Naive thymus-derived CD4-positive, alpha-beta T cell (primary cell): ENCODE measurements at regions of chr15 and their contacts with region 1.

Region 1: DNA sequence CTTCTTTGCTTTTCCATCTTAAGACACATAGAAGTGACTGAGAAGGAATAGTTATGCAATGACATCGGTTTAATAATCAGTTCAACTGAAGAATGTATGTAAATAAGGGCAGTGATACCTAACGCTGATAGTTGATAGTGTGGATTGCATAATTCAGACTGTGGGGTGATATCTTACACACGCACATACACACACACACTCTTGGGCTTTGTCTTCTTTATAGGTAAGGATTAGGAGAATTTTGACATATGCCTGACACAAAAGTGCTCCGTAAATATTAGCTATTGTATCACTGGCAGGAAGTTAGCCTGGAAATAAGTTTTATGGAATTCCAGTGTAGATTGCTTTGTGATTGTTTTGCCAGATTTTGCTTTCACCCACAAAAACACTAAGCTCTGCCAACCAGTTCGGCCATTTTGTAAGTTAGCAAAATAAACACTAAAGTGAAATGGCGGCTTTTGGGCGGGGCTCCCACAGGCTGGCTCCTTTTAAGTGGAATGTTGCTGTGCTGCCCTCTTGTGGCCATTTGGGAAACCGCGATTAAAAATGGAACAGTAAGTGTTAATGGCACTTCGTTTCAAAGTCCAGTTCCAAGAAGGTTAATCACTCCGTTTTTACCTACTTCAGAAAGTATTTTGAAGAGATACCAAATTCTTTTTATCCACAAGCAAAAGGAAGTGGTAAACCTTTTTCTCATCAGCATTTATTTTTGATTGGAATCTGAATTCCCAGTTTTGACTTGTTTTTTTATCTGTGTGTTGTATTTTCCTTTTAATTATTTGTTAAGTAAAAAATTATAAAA is 17.7 kb downstream of the CHD2 start:
- DNase-seq: peak; percentile 74 to 91 (median 89)
- ATAC-seq: peak; percentile 78
- H3K4me3 ChIP-seq: peak overlapping the region; percentile 5
- H3K4me3 Mint-ChIP-seq: peak overlapping the region; percentile 43 to 81 (median 70)
- H3K27ac ChIP-seq: peak overlapping the region; percentile 92
- H3K27ac Mint-ChIP-seq: peak overlapping the region; percentile 82 to 100 (median 96)
- H3K4me1 ChIP-seq: peaks cover 64 to 76% of the 10 kb centered on the region in 2 donors
- H3K4me1 Mint-ChIP-seq: peaks cover 53 to 92% (median 86%) of the 10 kb centered on the region in 7 donors
- H3K27me3 ChIP-seq: no peaks in the 10 kb centered on the region
- H3K27me3 Mint-ChIP-seq: no peaks in the 10 kb centered on the region

Region 2: DNA sequence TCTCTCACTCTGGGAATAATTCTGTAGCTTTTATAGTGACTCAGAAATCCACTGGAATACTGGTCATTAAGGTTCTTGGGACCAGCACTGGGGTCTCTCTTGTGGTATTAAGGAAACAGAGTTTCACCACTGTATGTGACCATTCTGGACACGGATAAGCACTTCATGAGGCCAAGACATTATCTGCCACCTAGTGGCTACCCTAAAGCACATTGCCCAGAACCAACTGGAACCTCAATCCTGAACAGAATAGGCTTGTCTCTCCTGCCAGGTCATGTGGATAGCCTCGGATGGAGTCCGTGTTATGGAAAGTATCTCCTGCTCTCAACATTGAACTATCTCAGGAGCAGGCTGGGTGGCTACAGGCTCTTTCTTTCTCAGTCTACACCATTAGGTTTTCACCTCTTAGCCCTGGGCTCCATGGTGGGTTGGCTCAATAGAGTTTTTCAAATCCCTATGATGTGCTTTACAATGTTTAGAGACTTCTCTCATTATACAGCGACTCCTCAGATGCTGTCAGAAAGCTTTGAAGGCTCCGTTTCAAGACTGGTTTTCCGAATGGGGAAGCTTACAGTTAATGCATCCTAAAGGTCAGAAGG is 691.7 kb before region 1 on chr15:
- CTCF ChIA-PET with region 1: no interaction called
- POLR2A ChIA-PET with region 1: no interaction called
- intact Hi-C with region 1: no loop called
- DNase-seq: no peak
- ATAC-seq: no peak
- H3K4me3 ChIP-seq: no peak overlapping the region
- H3K4me3 Mint-ChIP-seq: no peak overlapping the region
- H3K27ac ChIP-seq: no peak overlapping the region
- H3K27ac Mint-ChIP-seq: no peak overlapping the region
- H3K4me1 ChIP-seq: no peaks in the 10 kb centered on the region
- H3K4me1 Mint-ChIP-seq: no peaks in the 10 kb centered on the region
- H3K27me3 ChIP-seq: no peaks in the 10 kb centered on the region
- H3K27me3 Mint-ChIP-seq: peaks cover 9 to 41% (median 29%) of the 10 kb centered on the region in 5 donors

Region 3: GRCh38 chr15:92797168-92797951 is 120.4 kb before region 1 on chr15:
- CTCF ChIA-PET with region 1: interaction called, 21 read pairs
- POLR2A ChIA-PET with region 1: interaction called, 45 read pairs
- intact Hi-C with region 1: loop called (anchors 1 kb)
- DNase-seq: peak in 7 of 9 donors; percentile 61 to 81 (median 74)
- ATAC-seq: peak; percentile 95
- H3K4me3 ChIP-seq: no peak overlapping the region
- H3K4me3 Mint-ChIP-seq: peak overlapping the region in 1 of 10 donors; percentile 12
- H3K27ac ChIP-seq: no peak overlapping the region
- H3K27ac Mint-ChIP-seq: peak overlapping the region; percentile 72 to 95 (median 79)
- H3K4me1 ChIP-seq: peaks cover 3 to 4% of the 10 kb centered on the region in 2 donors
- H3K4me1 Mint-ChIP-seq: peaks cover 6 to 23% (median 12%) of the 10 kb centered on the region in 7 donors
- H3K27me3 ChIP-seq: no peaks in the 10 kb centered on the region
- H3K27me3 Mint-ChIP-seq: no peaks in the 10 kb centered on the region

Region 4: DNA sequence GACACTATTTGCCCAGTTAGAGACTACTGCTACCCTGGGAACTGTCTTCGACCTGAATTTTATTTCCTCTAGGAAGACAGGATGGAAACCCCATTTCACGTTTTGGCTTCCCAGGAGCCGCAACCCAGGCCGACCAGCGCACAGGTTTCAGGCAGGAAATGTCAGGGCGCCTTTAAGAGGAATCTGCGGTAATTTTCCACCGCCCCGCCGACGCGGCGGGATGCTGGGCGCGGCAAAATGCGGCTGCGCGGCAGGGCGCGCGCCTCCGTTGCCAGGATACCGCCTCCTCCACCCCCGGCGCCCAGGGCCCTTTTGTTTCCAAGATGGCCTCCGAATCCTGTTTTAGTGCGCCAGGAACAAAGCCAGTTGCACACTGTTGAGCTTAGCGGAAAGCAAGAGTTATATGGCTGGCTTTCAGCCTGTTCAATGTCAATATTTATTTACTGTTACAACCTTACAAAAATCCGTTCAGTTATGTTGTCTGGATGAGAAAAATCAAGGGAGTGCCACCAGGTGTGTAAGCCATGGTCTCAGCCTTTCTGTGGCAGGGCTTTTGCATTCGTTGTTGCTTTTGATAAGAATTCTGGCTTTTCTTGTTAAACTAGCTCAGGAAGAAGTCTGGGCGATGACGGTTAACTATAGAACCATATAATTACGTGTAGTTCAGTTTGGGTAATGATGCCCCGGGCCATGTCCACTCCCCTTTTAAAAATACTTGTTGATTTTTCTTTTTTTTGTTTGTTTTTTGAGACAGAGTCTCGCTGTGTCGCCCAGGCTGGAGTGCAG is 97.4 kb before region 1 on chr15:
- CTCF ChIA-PET with region 1: interaction called, 4 read pairs
- POLR2A ChIA-PET with region 1: interaction called, 11 read pairs
- intact Hi-C with region 1: no loop called
- DNase-seq: peak; percentile 74 to 90 (median 86)
- ATAC-seq: peak; percentile 95
- H3K4me3 ChIP-seq: peak overlapping the region; percentile 76
- H3K4me3 Mint-ChIP-seq: peak overlapping the region; percentile 63 to 93 (median 88)
- H3K27ac ChIP-seq: peak overlapping the region; percentile 86
- H3K27ac Mint-ChIP-seq: peak overlapping the region; percentile 78 to 98 (median 91)
- H3K4me1 ChIP-seq: peaks cover 16 to 47% of the 10 kb centered on the region in 2 donors
- H3K4me1 Mint-ChIP-seq: peaks cover 25 to 74% (median 70%) of the 10 kb centered on the region in 7 donors
- H3K27me3 ChIP-seq: no peaks in the 10 kb centered on the region
- H3K27me3 Mint-ChIP-seq: no peaks in the 10 kb centered on the region

Region 5: DNA sequence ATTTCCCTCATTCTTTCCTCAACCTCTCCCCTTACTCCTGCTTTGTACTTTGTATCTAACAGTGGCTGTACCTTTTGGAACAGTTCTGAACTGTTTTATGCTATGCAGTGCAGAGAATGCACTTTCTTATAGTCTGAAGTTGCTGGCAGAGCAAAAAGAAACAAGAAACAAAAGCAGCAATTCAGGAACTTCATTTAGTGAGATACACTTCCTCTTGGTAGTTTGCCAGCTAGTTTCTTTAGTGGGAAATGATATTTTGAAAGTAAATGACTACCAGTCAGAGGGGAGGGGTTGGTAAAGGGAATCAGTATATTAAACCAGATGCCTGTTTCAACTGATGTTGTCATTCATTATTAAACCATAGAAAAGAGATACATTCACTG is 72.7 kb before region 1 on chr15:
- CTCF ChIA-PET with region 1: no interaction called
- POLR2A ChIA-PET with region 1: interaction called, 5 read pairs
- intact Hi-C with region 1: loop called in 1 of 2 experiments (anchors 1 kb)
- DNase-seq: peak in 7 of 9 donors; percentile 66 to 83 (median 73)
- ATAC-seq: peak; percentile 66
- H3K4me3 ChIP-seq: peak overlapping the region; percentile 11
- H3K4me3 Mint-ChIP-seq: peak overlapping the region; percentile 56 to 95 (median 82)
- H3K27ac ChIP-seq: peak overlapping the region; percentile 72
- H3K27ac Mint-ChIP-seq: peak overlapping the region; percentile 93 to 99 (median 97)
- H3K4me1 ChIP-seq: peaks cover 21 to 78% of the 10 kb centered on the region in 2 donors
- H3K4me1 Mint-ChIP-seq: peaks cover 41 to 91% (median 81%) of the 10 kb centered on the region in 7 donors
- H3K27me3 ChIP-seq: no peaks in the 10 kb centered on the region
- H3K27me3 Mint-ChIP-seq: no peaks in the 10 kb centered on the region

Region 6: GRCh38 chr15:92889390-92890107 is 28.3 kb before region 1 on chr15:
- CTCF ChIA-PET with region 1: interaction called, 8 read pairs
- POLR2A ChIA-PET with region 1: interaction called, 216 read pairs
- intact Hi-C with region 1: no loop called
- DNase-seq: peak in 1 of 9 donors; percentile 7
- ATAC-seq: peak; percentile 33
- H3K4me3 ChIP-seq: no peak overlapping the region
- H3K4me3 Mint-ChIP-seq: peak overlapping the region; percentile 56 to 84 (median 73)
- H3K27ac ChIP-seq: peak overlapping the region; percentile 61
- H3K27ac Mint-ChIP-seq: peak overlapping the region; percentile 78 to 92 (median 85)
- H3K4me1 ChIP-seq: peaks cover 60 to 66% of the 10 kb centered on the region in 2 donors
- H3K4me1 Mint-ChIP-seq: peaks cover 47 to 92% (median 75%) of the 10 kb centered on the region in 7 donors
- H3K27me3 ChIP-seq: no peaks in the 10 kb centered on the region
- H3K27me3 Mint-ChIP-seq: no peaks in the 10 kb centered on the region

Region 7: GRCh38 chr15:92930776-92931175 is 13.0 kb after region 1 on chr15:
- CTCF ChIA-PET with region 1: interaction called, 4 read pairs
- POLR2A ChIA-PET with region 1: interaction called, 6 read pairs
- intact Hi-C with region 1: loop called (anchors 1 to 2 kb)
- DNase-seq: no peak
- ATAC-seq: no peak
- H3K4me3 ChIP-seq: no peak overlapping the region
- H3K4me3 Mint-ChIP-seq: no peak overlapping the region
- H3K27ac ChIP-seq: no peak overlapping the region
- H3K27ac Mint-ChIP-seq: peak overlapping the region in 8 of 9 donors; percentile 32 to 71 (median 52)
- H3K4me1 ChIP-seq: peaks cover 10 to 15% of the 10 kb centered on the region in 2 donors
- H3K4me1 Mint-ChIP-seq: peaks cover 19 to 77% (median 67%) of the 10 kb centered on the region in 7 donors
- H3K27me3 ChIP-seq: no peaks in the 10 kb centered on the region
- H3K27me3 Mint-ChIP-seq: no peaks in the 10 kb centered on the region